Calu3 (cell line): ENCODE measurements at regions of chr6 and their contacts with region 1.

Region 1: DNA sequence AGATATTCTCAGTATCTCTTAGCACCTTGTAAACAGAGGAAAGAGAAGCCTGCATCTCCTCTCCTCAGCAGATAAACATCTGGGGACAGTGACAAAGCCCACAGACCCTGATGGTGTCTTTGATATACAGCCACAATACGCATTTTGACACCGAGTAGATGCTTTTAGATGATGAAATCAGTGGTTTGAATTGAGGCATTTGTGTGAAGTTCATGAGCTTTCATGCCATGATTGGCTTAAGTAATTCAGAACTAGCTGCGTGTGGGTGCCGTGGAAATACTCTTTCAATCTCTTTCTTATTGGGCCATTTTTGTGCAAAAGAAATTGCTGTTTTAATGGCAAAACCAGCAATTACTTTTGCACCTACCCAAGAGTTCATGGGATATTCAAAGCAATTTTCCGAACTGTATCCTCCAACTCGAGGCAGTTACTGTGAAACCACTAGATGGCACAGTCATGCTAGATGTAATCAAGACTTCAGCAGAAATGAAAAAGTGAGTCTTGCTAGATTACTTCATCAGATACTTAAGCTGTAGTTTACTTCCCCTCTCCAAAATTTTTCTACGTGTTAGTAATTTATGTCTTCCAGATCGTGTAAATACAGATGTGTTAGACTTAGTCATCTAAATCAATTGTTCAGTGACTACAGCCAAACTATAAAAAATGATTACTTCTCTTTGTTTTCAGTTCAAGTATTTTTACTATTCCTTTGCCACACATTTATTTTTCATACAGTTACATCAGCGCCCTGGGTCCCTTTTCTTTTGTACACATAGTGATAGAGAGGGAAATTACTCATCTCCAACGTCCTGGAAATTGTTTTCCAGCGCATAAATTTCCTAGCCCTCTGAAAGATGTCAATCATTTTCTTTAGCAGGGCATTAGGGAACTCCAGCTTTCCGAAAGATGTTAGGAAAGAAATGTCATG is 49.4 kb downstream of the IYD start:
- DNase-seq: peak; percentile 15
- H3K4me3 Mint-ChIP-seq: peak overlapping the region; percentile 57
- H3K27ac Mint-ChIP-seq: peak overlapping the region; percentile 89
- H3K4me1 Mint-ChIP-seq: peaks cover 24% of the 10 kb centered on the region
- H3K27me3 Mint-ChIP-seq: no peaks in the 10 kb centered on the region
- CTCF ChIP-seq: peak; percentile 42

Region 2: DNA sequence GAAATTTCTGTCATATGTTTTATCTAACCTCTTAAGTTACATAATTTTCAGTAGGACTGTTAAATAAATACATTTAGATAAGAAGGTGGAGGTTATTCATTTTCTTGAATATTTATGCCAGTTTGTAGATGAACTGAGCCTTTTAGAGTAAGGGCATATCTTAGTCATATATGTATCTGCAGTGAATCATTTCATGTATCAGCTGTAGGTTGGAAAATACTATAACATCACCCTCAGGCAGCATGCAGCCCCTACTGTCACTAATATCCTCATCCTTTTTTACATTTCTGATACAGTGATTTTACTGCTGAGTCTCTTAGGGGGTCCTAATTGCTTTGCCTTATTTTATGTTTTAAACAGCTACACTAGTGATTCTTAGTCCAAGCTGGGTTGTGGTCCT is 1037.6 kb before region 1 on chr6:
- CTCF ChIA-PET with region 1: no interaction called
- intact Hi-C with region 1: no loop called
- DNase-seq: no peak
- H3K4me3 Mint-ChIP-seq: no peak overlapping the region
- H3K27ac Mint-ChIP-seq: no peak overlapping the region
- H3K4me1 Mint-ChIP-seq: no peaks in the 10 kb centered on the region
- H3K27me3 Mint-ChIP-seq: no peaks in the 10 kb centered on the region
- CTCF ChIP-seq: no peak

Region 3: DNA sequence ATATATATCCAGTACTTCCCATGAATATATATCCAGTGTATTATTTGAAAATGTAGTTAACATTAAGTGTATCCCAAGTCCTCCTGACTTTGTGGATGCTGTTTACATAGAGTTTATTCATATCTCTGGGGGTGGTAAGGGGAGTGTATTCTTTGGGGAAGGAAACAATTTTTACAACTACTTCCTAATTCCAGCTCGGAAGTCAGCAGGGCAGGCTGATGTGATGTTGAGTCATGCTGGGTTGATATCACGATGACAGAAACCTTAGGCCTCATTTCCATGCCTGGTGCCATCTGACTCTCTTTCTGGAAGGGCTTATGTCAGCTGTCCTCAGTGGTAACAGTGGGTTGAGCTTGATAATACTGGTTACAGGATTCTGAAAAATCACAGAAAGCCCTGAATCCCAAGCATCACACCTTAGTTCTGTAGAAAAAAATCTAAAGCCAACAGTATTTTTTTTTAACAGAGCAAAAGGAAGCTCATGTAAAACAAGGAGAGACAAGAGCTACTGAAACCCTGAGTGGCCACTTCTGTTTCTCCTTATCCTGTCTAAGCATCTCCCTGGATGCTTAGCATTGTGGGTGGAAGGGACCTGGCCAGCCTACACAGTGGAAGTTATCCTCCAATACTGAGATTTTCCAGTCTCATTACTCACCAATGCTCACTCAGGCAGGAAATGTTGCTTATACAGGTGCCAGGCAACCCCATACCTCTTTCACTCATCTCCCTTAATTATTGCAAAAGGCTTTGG is 124.6 kb before region 1 on chr6:
- CTCF ChIA-PET with region 1: no interaction called
- intact Hi-C with region 1: no loop called
- DNase-seq: no peak
- H3K4me3 Mint-ChIP-seq: no peak overlapping the region
- H3K27ac Mint-ChIP-seq: no peak overlapping the region
- H3K4me1 Mint-ChIP-seq: peaks cover 13% of the 10 kb centered on the region
- H3K27me3 Mint-ChIP-seq: no peaks in the 10 kb centered on the region
- CTCF ChIP-seq: no peak

Region 4: DNA sequence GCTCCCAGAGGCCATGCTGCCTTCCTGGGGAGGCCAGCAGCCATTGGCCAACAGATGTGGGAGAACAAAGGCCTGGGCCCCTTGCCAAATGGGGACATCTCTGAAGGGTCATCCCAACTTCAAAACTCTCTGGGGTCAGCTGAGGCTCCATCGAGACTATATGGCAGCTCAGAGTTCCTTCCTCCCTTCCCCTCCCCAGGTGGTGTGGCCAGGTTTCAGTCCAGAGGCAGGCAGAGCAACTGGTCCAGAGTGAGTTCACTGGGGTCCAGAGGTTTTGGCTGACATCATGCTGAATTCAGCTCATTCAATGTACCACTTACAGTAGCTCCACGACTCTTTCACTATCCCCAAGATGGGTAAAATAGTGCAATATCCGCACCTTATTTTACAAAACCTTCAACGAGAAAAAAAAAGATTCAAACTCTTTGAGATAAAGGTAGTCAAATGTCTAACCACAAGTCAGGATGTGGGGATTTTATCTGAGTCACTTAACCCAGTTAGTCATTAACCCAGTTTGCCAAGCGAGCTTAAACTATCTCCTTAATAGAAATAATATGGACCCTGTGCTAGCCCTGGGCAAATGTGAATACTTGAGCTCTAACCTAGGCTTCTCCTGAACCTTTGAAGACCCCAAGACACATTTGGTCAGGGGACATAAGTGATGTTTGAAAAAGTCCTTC is 73.1 kb after region 1 on chr6:
- CTCF ChIA-PET with region 1: interaction called, 7 read pairs
- intact Hi-C with region 1: loop called (anchors 2 kb)
- DNase-seq: peak; percentile 30
- H3K4me3 Mint-ChIP-seq: peak overlapping the region; percentile 30
- H3K27ac Mint-ChIP-seq: peak overlapping the region; percentile 79
- H3K4me1 Mint-ChIP-seq: peaks cover 18% of the 10 kb centered on the region
- H3K27me3 Mint-ChIP-seq: no peaks in the 10 kb centered on the region
- CTCF ChIP-seq: no peak

Region 5: GRCh38 chr6:150567823-150568383 is 149.7 kb after region 1 on chr6:
- CTCF ChIA-PET with region 1: no interaction called
- intact Hi-C with region 1: no loop called
- DNase-seq: no peak
- H3K4me3 Mint-ChIP-seq: no peak overlapping the region
- H3K27ac Mint-ChIP-seq: no peak overlapping the region
- H3K4me1 Mint-ChIP-seq: no peaks in the 10 kb centered on the region
- H3K27me3 Mint-ChIP-seq: no peaks in the 10 kb centered on the region
- CTCF ChIP-seq: no peak

Region 6: GRCh38 chr6:150600301-150601017 is 182.3 kb after region 1 on chr6:
- CTCF ChIA-PET with region 1: interaction called, 17 read pairs
- intact Hi-C with region 1: loop called (anchors 2 kb)
- DNase-seq: peak; percentile 77
- H3K4me3 Mint-ChIP-seq: peak overlapping the region; percentile 82
- H3K27ac Mint-ChIP-seq: peak overlapping the region; percentile 77
- H3K4me1 Mint-ChIP-seq: no peaks in the 10 kb centered on the region
- H3K27me3 Mint-ChIP-seq: no peaks in the 10 kb centered on the region
- CTCF ChIP-seq: peak; percentile 23

Region 7: GRCh38 chr6:150667977-150668716 is 250.0 kb after region 1 on chr6:
- CTCF ChIA-PET with region 1: no interaction called
- intact Hi-C with region 1: loop called (anchors 2 kb)
- DNase-seq: peak; percentile 86
- H3K4me3 Mint-ChIP-seq: no peak overlapping the region
- H3K27ac Mint-ChIP-seq: peak overlapping the region; percentile 81
- H3K4me1 Mint-ChIP-seq: no peaks in the 10 kb centered on the region
- H3K27me3 Mint-ChIP-seq: no peaks in the 10 kb centered on the region
- CTCF ChIP-seq: no peak

Region 8: GRCh38 chr6:150741633-150742504 is 323.7 kb after region 1 on chr6:
- CTCF ChIA-PET with region 1: interaction called, 3 read pairs
- intact Hi-C with region 1: loop called (anchors 5 kb)
- DNase-seq: no peak
- H3K4me3 Mint-ChIP-seq: no peak overlapping the region
- H3K27ac Mint-ChIP-seq: no peak overlapping the region
- H3K4me1 Mint-ChIP-seq: peaks cover 16% of the 10 kb centered on the region
- H3K27me3 Mint-ChIP-seq: no peaks in the 10 kb centered on the region
- CTCF ChIP-seq: no peak